ENCODE measurements at regions of chr7 and their contacts with region 1.

Region 1: GRCh38 chr7:26090927-26091519 is 61.0 kb upstream of the NFE2L3 start:
- DNase-seq: peak; percentile 37
- ATAC-seq: no peak
- H3K4me3 Mint-ChIP-seq: peak overlapping the region; percentile 5
- H3K27ac Mint-ChIP-seq: peak overlapping the region; percentile 0
- H3K4me1 Mint-ChIP-seq: peaks cover 26% of the 10 kb centered on the region
- H3K27me3 Mint-ChIP-seq: no peaks in the 10 kb centered on the region

Region 2: DNA sequence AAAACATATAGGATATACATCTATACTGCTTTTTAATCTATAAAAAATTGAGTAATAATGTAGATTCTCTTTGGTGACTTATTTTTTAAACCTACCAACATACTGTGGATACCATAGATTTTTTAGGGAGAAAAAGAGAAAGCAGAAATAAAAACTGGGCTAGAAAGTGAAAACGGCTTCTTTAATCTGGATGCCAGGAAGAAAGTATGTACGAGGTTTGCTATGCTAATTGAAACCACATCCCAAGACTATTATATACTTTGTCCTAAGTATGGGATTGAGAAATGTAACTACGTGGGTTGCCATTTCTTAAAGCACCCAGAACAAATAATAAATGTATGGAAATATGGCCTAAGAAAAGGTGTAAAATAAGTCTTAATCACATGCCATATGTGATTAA is 68.0 kb before region 1 on chr7:
- CTCF ChIA-PET with region 1: no interaction called
- POLR2A ChIA-PET with region 1: no interaction called
- DNase-seq: no peak
- ATAC-seq: no peak
- H3K4me3 Mint-ChIP-seq: no peak overlapping the region
- H3K27ac Mint-ChIP-seq: no peak overlapping the region
- H3K4me1 Mint-ChIP-seq: no peaks in the 10 kb centered on the region
- H3K27me3 Mint-ChIP-seq: peaks cover 4% of the 10 kb centered on the region

Region 3: DNA sequence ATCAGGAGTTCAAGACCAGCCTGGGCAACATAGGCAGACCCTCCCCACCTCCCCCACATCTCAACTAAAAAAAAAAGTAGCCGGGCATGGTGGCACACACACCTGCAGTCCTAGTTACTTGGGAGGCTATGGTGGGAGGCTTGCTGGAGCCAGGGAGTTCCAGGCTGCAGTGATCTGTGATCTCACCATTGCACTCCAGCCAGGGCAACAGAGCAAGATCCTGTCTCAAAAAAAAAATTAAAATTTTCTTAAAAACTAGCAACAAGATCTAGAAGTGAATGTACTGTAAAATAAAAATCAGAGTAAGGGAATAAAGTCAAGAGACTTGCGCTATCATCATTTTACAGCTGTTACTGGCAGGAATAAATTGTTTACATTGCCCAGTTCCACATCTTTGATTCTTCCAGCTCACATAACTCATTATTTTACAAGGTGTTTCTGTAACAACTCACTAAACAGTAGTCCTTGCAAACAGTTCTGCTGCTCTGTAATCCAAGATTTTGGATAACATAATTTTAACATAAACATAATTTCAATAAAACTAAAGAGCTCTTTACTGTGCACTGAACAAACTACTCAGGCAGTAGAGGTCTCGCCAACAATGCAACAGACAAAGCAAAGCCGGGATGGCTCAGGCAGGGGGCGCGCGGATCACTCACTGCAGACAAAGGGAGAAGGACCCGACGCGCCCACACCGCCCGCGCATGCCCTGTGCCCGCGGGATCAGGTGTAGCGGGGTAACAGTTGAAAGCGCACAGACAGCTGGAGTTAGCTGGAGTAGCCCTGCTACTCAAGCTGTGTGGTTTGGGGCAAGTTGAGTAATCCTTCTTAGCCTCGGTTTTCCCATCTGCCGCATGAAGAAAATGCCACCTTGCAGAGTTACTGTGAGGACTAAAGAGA is 12.3 kb before region 1 on chr7:
- CTCF ChIA-PET with region 1: interaction called, 88 read pairs
- POLR2A ChIA-PET with region 1: interaction called, 5 read pairs
- DNase-seq: peak; percentile 85
- ATAC-seq: peak; percentile 100
- H3K4me3 Mint-ChIP-seq: peak overlapping the region; percentile 19
- H3K27ac Mint-ChIP-seq: no peak overlapping the region
- H3K4me1 Mint-ChIP-seq: peaks cover 11% of the 10 kb centered on the region
- H3K27me3 Mint-ChIP-seq: peaks cover 44% of the 10 kb centered on the region

Region 4: GRCh38 chr7:26117970-26118369 is 26.9 kb after region 1 on chr7:
- CTCF ChIA-PET with region 1: interaction called, 10 read pairs
- POLR2A ChIA-PET with region 1: interaction called, 3 read pairs
- DNase-seq: no peak
- ATAC-seq: no peak
- H3K4me3 Mint-ChIP-seq: no peak overlapping the region
- H3K27ac Mint-ChIP-seq: no peak overlapping the region
- H3K4me1 Mint-ChIP-seq: no peaks in the 10 kb centered on the region
- H3K27me3 Mint-ChIP-seq: peaks cover 5% of the 10 kb centered on the region

Region 5: GRCh38 chr7:26151953-26152781 is 61.1 kb after region 1 on chr7 and contains the start of gene NFE2L3:
- CTCF ChIA-PET with region 1: interaction called, 57 read pairs
- POLR2A ChIA-PET with region 1: interaction called, 11 read pairs
- DNase-seq: peak; percentile 87
- ATAC-seq: peak; percentile 76
- H3K4me3 Mint-ChIP-seq: peak within 1 kb of the TSS; percentile 92
- H3K27ac Mint-ChIP-seq: peak within 1 kb of the TSS; percentile 98
- H3K4me1 Mint-ChIP-seq: peaks cover 64% of the 10 kb centered on the region
- H3K27me3 Mint-ChIP-seq: no peaks in the 10 kb centered on the region
- total RNA-seq, gene NFE2L3: 9.7 to 10.4 TPM

Region 6: GRCh38 chr7:26180792-26181198 is 89.8 kb after region 1 on chr7:
- CTCF ChIA-PET with region 1: interaction called, 37 read pairs
- POLR2A ChIA-PET with region 1: interaction called, 10 read pairs
- DNase-seq: no peak
- ATAC-seq: no peak
- H3K4me3 Mint-ChIP-seq: no peak overlapping the region
- H3K27ac Mint-ChIP-seq: no peak overlapping the region
- H3K4me1 Mint-ChIP-seq: peaks cover 17% of the 10 kb centered on the region
- H3K27me3 Mint-ChIP-seq: no peaks in the 10 kb centered on the region

Region 7: GRCh38 chr7:26284995-26285632 is 194.1 kb after region 1 on chr7:
- CTCF ChIA-PET with region 1: interaction called, 27 read pairs
- POLR2A ChIA-PET with region 1: no interaction called
- DNase-seq: no peak
- ATAC-seq: peak; percentile 73
- H3K4me3 Mint-ChIP-seq: no peak overlapping the region
- H3K27ac Mint-ChIP-seq: no peak overlapping the region
- H3K4me1 Mint-ChIP-seq: peaks cover 4% of the 10 kb centered on the region
- H3K27me3 Mint-ChIP-seq: peaks cover 8% of the 10 kb centered on the region

Region 8: GRCh38 chr7:26321435-26321834 is 230.4 kb after region 1 on chr7:
- CTCF ChIA-PET with region 1: no interaction called
- POLR2A ChIA-PET with region 1: no interaction called
- DNase-seq: no peak
- ATAC-seq: no peak
- H3K4me3 Mint-ChIP-seq: no peak overlapping the region
- H3K27ac Mint-ChIP-seq: peak overlapping the region; percentile 34
- H3K4me1 Mint-ChIP-seq: no peaks in the 10 kb centered on the region
- H3K27me3 Mint-ChIP-seq: no peaks in the 10 kb centered on the region